Ascending aorta (tissue), 2 donors: ENCODE measurements at regions of chr3 and their contacts with region 1.

Region 1: GRCh38 chr3:31550452-31551251 is 17.9 kb downstream of the STT3B start:
- DNase-seq: no peak
- H3K4me3 ChIP-seq: no peak overlapping the region
- H3K27ac ChIP-seq: peak overlapping the region in 1 of 2 donors; percentile 77
- H3K4me1 ChIP-seq: peaks cover 6 to 41% of the 10 kb centered on the region in 2 donors
- H3K27me3 ChIP-seq: no peaks in the 10 kb centered on the region
- CTCF ChIP-seq: peak; percentile 28 to 70 (median 62)

Region 2: GRCh38 chr3:30934208-30934550 is 616.5 kb before region 1 on chr3:
- intact Hi-C with region 1: loop called (anchors 5 kb)
- DNase-seq: no peak
- H3K4me3 ChIP-seq: peak overlapping the region in 1 of 2 donors; percentile 51
- H3K27ac ChIP-seq: no peak overlapping the region
- H3K4me1 ChIP-seq: peaks cover 0 to 4% of the 10 kb centered on the region in 2 donors
- H3K27me3 ChIP-seq: no peaks in the 10 kb centered on the region
- CTCF ChIP-seq: peak; percentile 52 to 69 (median 63)

Region 3: DNA sequence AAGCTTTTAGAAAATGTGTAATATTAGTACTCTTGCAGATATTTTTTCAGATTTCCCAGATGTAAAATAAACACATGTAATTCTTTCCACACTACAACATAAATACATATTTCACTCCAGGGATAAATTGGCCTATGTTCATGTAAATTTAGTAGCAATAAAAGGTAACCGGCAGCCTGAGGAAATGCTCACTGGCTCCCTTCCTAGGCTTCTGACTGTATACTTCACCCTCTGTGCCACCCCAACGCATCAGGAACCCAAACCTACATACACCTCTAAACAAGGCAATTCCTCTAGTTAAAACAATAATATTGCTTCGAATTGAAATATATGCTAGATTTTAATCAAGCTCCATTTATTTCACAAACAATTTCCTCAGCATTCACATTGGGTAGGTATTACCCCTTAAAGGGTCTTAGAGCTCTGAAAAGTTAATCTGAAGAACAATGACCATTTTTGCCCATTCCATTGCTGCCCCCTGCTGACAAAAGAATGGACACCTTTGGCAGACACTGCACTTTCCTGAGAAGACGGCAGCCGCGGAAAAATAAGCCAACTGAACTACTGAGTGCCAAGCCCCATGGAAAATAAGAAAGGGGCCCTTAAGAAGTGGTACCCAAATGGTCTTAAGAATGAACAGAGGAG is 217.9 kb after region 1 on chr3:
- intact Hi-C with region 1: loop called (anchors 5 kb)
- DNase-seq: peak in 1 of 2 donors; percentile 69
- H3K4me3 ChIP-seq: no peak overlapping the region
- H3K27ac ChIP-seq: no peak overlapping the region
- H3K4me1 ChIP-seq: peaks cover 0 to 2% of the 10 kb centered on the region in 2 donors
- H3K27me3 ChIP-seq: no peaks in the 10 kb centered on the region
- CTCF ChIP-seq: peak; percentile 48 to 73 (median 53)